ENCODE measurements at regions of chrX and their contacts with region 1.

Region 1: GRCh38 chrX:119502727-119503483 is 34.7 kb downstream of the SLC25A5 start:
- DNase-seq: peak in 31 of 35 experiments; percentile 1 to 58 (median 25)
- ATAC-seq: peak; percentile 34 to 95 (median 68)
- H3K4me3 ChIP-seq: no peak overlapping the region
- H3K4me3 Mint-ChIP-seq: peak overlapping the region in 1 of 3 donors; percentile 41
- H3K27ac ChIP-seq: peak overlapping the region; percentile 54
- H3K27ac Mint-ChIP-seq: peak overlapping the region; percentile 91
- H3K4me1 ChIP-seq: peaks cover 3 to 18% of the 10 kb centered on the region in 2 experiments
- H3K4me1 Mint-ChIP-seq: peaks cover 15 to 21% (median 16%) of the 10 kb centered on the region in 3 donors
- H3K27me3 ChIP-seq: no peaks in the 10 kb centered on the region
- H3K27me3 Mint-ChIP-seq: no peaks in the 10 kb centered on the region

Region 2: DNA sequence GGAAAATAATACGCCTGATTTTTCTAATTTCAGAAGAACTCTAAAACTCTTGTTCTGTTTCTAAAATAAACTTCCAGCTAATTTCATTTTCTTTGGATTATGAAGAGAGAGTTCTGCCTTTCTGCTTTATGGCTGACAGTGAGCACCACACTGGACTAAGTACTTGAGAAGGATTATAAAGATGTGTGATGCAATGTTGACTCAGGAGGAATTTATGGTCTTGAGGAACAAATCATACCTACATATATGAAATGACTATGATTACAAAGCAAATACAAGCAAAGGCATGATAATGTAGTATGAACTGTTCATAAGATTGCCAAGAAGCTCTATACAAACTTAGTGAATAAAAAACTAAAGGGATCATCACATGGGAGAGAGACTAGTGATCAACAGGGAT is 47.6 kb before region 1 on chrX:
- CTCF ChIA-PET with region 1: no interaction called
- POLR2A ChIA-PET with region 1: no interaction called
- DNase-seq: no peak
- ATAC-seq: no peak
- H3K4me3 ChIP-seq: no peak overlapping the region
- H3K4me3 Mint-ChIP-seq: no peak overlapping the region
- H3K27ac ChIP-seq: no peak overlapping the region
- H3K27ac Mint-ChIP-seq: no peak overlapping the region
- H3K4me1 ChIP-seq: no peaks in the 10 kb centered on the region
- H3K4me1 Mint-ChIP-seq: no peaks in the 10 kb centered on the region
- H3K27me3 ChIP-seq: no peaks in the 10 kb centered on the region
- H3K27me3 Mint-ChIP-seq: peaks cover 0 to 6% of the 10 kb centered on the region in 2 donors

Region 3: GRCh38 chrX:119606280-119607015 is 103.5 kb after region 1 on chrX and contains the start of gene NKRF:
- CTCF ChIA-PET with region 1: no interaction called
- POLR2A ChIA-PET with region 1: interaction called in 1 of 2 experiments, 11 read pairs
- DNase-seq: peak; percentile 78 to 95 (median 87)
- ATAC-seq: peak; percentile 81 to 84 (median 82)
- H3K4me3 ChIP-seq: peak within 1 kb of the TSS; percentile 72 to 92
- H3K4me3 Mint-ChIP-seq: peak within 1 kb of the TSS; percentile 89 to 93 (median 89)
- H3K27ac ChIP-seq: peak within 1 kb of the TSS; percentile 97
- H3K27ac Mint-ChIP-seq: peak within 1 kb of the TSS; percentile 94
- H3K4me1 ChIP-seq: peaks cover 3 to 19% of the 10 kb centered on the region in 2 experiments
- H3K4me1 Mint-ChIP-seq: peaks cover 36 to 47% (median 36%) of the 10 kb centered on the region in 3 donors
- H3K27me3 ChIP-seq: no peaks in the 10 kb centered on the region
- H3K27me3 Mint-ChIP-seq: no peaks in the 10 kb centered on the region
- total RNA-seq, gene NKRF: 13.0 to 14.2 (median 13.7) TPM

Measured in T-cell (primary cell).